ENCODE measurements at regions of chr2 and their contacts with region 1.

Region 1: DNA sequence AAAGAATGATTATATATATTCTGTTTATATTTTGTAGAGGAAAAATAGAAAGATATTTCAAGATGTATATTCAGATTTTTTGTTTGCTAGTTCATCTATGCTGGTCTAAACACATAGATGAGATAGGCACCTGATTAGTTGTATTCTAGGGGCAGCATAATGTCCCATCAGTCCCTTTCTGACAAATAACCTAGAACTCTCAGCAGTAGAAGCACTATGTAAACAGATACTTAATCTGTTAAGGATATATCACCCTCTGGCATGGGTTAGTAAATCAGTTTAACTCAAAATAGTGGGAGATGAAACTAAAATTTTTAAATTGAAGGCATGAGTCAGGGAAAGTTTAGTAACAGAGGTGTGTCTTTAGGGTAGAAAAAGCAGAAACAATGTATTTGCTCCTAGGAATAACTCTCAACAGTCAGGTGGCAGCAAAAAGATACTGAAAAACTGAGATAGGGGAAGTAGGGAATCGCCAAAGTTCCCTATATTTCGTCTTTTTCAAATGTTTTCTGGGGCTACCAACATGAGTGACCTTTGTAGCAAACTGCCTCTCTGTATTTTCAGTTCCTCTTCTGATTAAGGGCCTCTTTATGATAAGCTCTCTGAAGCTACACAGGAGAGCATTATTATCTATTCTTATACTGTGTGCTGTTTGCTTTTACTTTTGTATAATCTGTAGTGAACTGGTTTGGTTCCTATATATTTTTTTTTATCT is 5.7 kb downstream of the PPP1R1C start:
- DNase-seq: no peak
- ATAC-seq: no peak

Region 2: GRCh38 chr2:182031956-182032355 is 40.6 kb after region 1 on chr2:
- intact Hi-C with region 1: loop called in 1 of 2 experiments (anchors 2 kb)
- DNase-seq: no peak
- ATAC-seq: no peak